IMR-90 (cell line): ENCODE measurements at regions of chr6 and their contacts with region 1.

Region 1: GRCh38 chr6:53651764-53652401 is 13.7 kb downstream of the KLHL31 start:
- DNase-seq: peak; percentile 44
- ATAC-seq: peak; percentile 89
- H3K4me3 ChIP-seq: peak overlapping the region; percentile 78
- H3K27ac ChIP-seq: no peak overlapping the region; the same call in 1 of the 2 replicates
- H3K4me1 ChIP-seq: peaks cover 1% of the 10 kb centered on the region; the same call in 1 of the 2 replicates
- H3K27me3 ChIP-seq: peaks cover 10% of the 10 kb centered on the region; the same call in 1 of the 2 replicates
- CTCF ChIP-seq: 0 out of 2 replicates have a peak, but pooled peaks have one; percentile 20
- POLR2A ChIP-seq: no peak
- RAD21 ChIP-seq: no peak

Region 2: GRCh38 chr6:53513519-53513966 is 138.3 kb before region 1 on chr6:
- CTCF ChIA-PET with region 1: interaction called, 20 read pairs
- POLR2A ChIA-PET with region 1: no interaction called
- dilution Hi-C with region 1: no loop called
- in situ Hi-C with region 1: no loop called
- intact Hi-C with region 1: loop called (anchors 1 kb)
- DNase-seq: no peak
- ATAC-seq: peak; percentile 75
- H3K4me3 ChIP-seq: no peak overlapping the region
- H3K27ac ChIP-seq: peak overlapping the region; percentile 74; the same call in 1 of the 2 replicates
- H3K4me1 ChIP-seq: peaks cover 4% of the 10 kb centered on the region; the same call in 1 of the 2 replicates
- H3K27me3 ChIP-seq: no peaks in the 10 kb centered on the region
- CTCF ChIP-seq: peak; percentile 49
- POLR2A ChIP-seq: no peak
- RAD21 ChIP-seq: peak; percentile 61

Region 3: GRCh38 chr6:53664623-53665022 is 12.7 kb after region 1 on chr6:
- CTCF ChIA-PET with region 1: interaction called, 3 read pairs
- POLR2A ChIA-PET with region 1: interaction called, 12 read pairs
- dilution Hi-C with region 1: no loop called
- in situ Hi-C with region 1: no loop called
- intact Hi-C with region 1: no loop called
- DNase-seq: no peak
- ATAC-seq: no peak
- H3K4me3 ChIP-seq: no peak overlapping the region
- H3K27ac ChIP-seq: no peak overlapping the region
- H3K4me1 ChIP-seq: no peaks in the 10 kb centered on the region
- H3K27me3 ChIP-seq: peaks cover 23% of the 10 kb centered on the region
- CTCF ChIP-seq: no peak
- POLR2A ChIP-seq: no peak
- RAD21 ChIP-seq: no peak

Region 4: GRCh38 chr6:53718597-53719460 is 66.9 kb after region 1 on chr6:
- CTCF ChIA-PET with region 1: interaction called, 3 read pairs
- POLR2A ChIA-PET with region 1: no interaction called
- dilution Hi-C with region 1: no loop called
- in situ Hi-C with region 1: no loop called
- intact Hi-C with region 1: loop called (anchors 5 kb)
- DNase-seq: peak; percentile 75
- ATAC-seq: peak; percentile 44; the same call in 1 of the 2 replicates
- H3K4me3 ChIP-seq: no peak overlapping the region
- H3K27ac ChIP-seq: no peak overlapping the region
- H3K4me1 ChIP-seq: peaks cover 6% of the 10 kb centered on the region
- H3K27me3 ChIP-seq: no peaks in the 10 kb centered on the region; the same call in 1 of the 2 replicates
- CTCF ChIP-seq: peak; percentile 74
- POLR2A ChIP-seq: no peak
- RAD21 ChIP-seq: peak; percentile 51

Region 5: GRCh38 chr6:53725791-53726431 is 74.0 kb after region 1 on chr6:
- CTCF ChIA-PET with region 1: interaction called, 10 read pairs
- POLR2A ChIA-PET with region 1: no interaction called
- dilution Hi-C with region 1: no loop called
- in situ Hi-C with region 1: no loop called
- intact Hi-C with region 1: no loop called
- DNase-seq: peak; percentile 69
- ATAC-seq: peak; percentile 94
- H3K4me3 ChIP-seq: no peak overlapping the region
- H3K27ac ChIP-seq: no peak overlapping the region
- H3K4me1 ChIP-seq: peaks cover 3% of the 10 kb centered on the region; the same call in 1 of the 2 replicates
- H3K27me3 ChIP-seq: no peaks in the 10 kb centered on the region
- CTCF ChIP-seq: peak; percentile 95
- POLR2A ChIP-seq: no peak
- RAD21 ChIP-seq: peak; percentile 89